Left lung (tissue), 14 donors: ENCODE measurements at regions of chr3 and their contacts with region 1.

Region 1: GRCh38 chr3:151439652-151440129 is 21.2 kb downstream of the IGSF10 start:
- DNase-seq: peak in 2 of 4 donors; percentile 59 to 75
- ATAC-seq: peak; percentile 95
- H3K4me3 ChIP-seq: no peak overlapping the region
- H3K27ac ChIP-seq: no peak overlapping the region
- H3K4me1 ChIP-seq: no peaks in the 10 kb centered on the region
- H3K27me3 ChIP-seq: no peaks in the 10 kb centered on the region
- CTCF ChIP-seq: peak; percentile 75 to 84

Region 2: GRCh38 chr3:151660885-151661284 is 221.2 kb after region 1 on chr3:
- intact Hi-C with region 1: loop called in 1 of 2 experiments (anchors 10 kb)
- DNase-seq: peak in 1 of 4 donors; percentile 27
- ATAC-seq: no peak
- H3K4me3 ChIP-seq: no peak overlapping the region
- H3K27ac ChIP-seq: no peak overlapping the region
- H3K4me1 ChIP-seq: no peaks in the 10 kb centered on the region
- H3K27me3 ChIP-seq: no peaks in the 10 kb centered on the region
- CTCF ChIP-seq: peak in 1 of 2 donors; percentile 21

Region 3: GRCh38 chr3:151843275-151843674 is 403.6 kb after region 1 on chr3:
- intact Hi-C with region 1: loop called in 1 of 2 experiments (anchors 10 kb)
- DNase-seq: no peak
- ATAC-seq: no peak
- H3K4me3 ChIP-seq: no peak overlapping the region
- H3K27ac ChIP-seq: no peak overlapping the region
- H3K4me1 ChIP-seq: peaks cover 0 to 4% of the 10 kb centered on the region in 2 donors
- H3K27me3 ChIP-seq: no peaks in the 10 kb centered on the region
- CTCF ChIP-seq: no peak